ENCODE measurements at regions of chr4 and their contacts with region 1.

Region 1: GRCh38 chr4:78517050-78517652 is 34.4 kb upstream of the ANXA3 start:
- DNase-seq: peak in 3 of 4 experiments; percentile 18 to 45 (median 23)
- ATAC-seq: peak; percentile 82
- H3K4me3 ChIP-seq: no peak overlapping the region
- H3K27ac ChIP-seq: no peak overlapping the region
- H3K4me1 ChIP-seq: no peaks in the 10 kb centered on the region
- H3K27me3 ChIP-seq: peaks cover 2 to 6% of the 10 kb centered on the region in 2 experiments; a peak in 2 of 5 replicates
- CTCF ChIP-seq: peak; percentile 53 to 79 (median 57); a peak in 5 of 6 replicates
- EP300 ChIP-seq: no peak
- POLR2A ChIP-seq: no peak
- RAD21 ChIP-seq: peak; percentile 77 to 82

Region 2: DNA sequence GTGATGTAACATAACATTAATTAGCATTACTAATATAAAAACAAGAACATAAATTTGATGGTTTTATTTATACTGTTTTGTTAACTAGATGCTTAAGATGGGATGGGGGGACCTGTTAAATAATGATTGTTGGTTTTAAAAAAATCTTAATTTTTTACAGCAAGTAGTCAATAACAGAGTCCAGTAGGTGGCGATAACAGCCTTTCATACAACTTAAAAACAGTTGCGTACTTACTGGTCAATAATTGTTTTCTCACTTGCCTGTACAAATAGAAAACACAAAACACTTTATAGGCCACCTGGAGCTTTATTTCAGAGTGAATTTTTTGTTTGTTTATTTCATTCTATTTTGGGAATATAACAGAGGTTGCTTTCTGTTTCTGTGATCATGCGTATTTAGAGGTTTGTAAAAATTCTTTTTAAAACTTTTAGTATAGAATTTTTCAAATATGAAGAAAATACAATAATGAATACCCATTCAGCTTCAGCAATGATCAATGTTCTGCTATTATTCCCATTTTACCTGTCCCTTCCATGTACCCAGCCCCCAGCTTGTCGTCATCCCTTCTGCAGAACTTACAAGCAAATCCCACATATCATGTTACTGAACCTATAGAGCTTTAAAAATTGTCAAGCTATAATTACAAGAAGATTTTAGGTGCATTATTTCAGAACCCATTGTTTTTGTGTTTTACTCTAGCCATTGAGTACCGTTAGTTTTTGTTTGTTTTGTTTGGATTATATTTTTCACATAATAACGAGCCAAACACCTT is 557.4 kb before region 1 on chr4:
- CTCF ChIA-PET with region 1: interaction called, 5 read pairs
- POLR2A ChIA-PET with region 1: no interaction called
- in situ Hi-C with region 1: no loop called
- intact Hi-C with region 1: loop called (anchors 2 kb)
- DNase-seq: peak; percentile 34 to 60 (median 45)
- ATAC-seq: peak; percentile 66
- H3K4me3 ChIP-seq: no peak overlapping the region
- H3K27ac ChIP-seq: no peak overlapping the region
- H3K4me1 ChIP-seq: no peaks in the 10 kb centered on the region
- H3K27me3 ChIP-seq: no peaks in the 10 kb centered on the region
- CTCF ChIP-seq: peak; percentile 43 to 64 (median 44); a peak in 3 of 6 replicates
- EP300 ChIP-seq: no peak
- POLR2A ChIP-seq: no peak
- RAD21 ChIP-seq: peak; percentile 68 to 73

Region 3: DNA sequence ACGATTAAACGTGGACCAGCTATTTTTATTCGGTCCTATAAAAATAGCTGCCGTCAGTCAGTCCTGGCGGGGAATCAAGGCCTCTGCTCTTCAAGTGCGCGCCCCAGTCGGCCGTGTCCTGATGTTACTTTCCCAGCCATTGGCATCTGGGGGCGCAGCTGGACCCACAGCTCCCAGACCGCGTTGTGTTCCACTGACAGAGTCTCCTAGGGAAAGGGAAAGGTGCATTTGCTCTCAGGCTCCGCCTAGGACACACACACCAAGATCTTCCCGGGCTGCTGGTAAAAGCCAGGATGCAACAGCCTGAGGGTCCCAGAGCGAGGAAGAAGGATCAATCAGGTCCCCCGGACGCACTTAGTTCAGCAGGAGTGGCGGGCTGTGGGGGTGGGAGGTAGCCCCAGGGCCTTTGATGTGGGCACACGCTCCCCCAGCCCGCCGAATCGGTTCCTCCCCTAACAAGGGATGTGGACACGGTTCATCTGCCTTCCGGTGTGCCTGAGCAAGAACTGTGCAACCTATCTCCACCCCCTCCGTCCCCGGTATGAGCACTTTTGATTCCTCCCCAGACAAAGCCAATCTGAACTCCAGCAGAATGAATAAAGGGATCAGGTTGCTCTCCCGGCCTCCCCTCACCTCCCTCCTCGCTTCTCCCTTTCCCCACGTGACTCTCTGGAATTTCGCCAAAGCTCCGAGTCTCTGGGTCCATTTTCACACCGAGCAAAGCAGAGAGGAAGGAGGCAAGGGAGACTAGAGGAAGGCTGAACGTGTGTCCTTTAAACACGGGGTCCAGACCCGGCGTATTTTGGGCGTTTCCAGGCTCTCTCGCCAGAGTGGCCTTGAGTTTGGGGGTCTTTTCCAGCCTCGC is 460.7 kb before region 1 on chr4:
- CTCF ChIA-PET with region 1: no interaction called
- POLR2A ChIA-PET with region 1: no interaction called
- in situ Hi-C with region 1: no loop called
- intact Hi-C with region 1: loop called (anchors 1 kb)
- DNase-seq: peak; percentile 10 to 28 (median 16)
- ATAC-seq: peak; percentile 39
- H3K4me3 ChIP-seq: no peak overlapping the region
- H3K27ac ChIP-seq: no peak overlapping the region
- H3K4me1 ChIP-seq: peaks cover 0 to 18% of the 10 kb centered on the region in 2 experiments; a peak in 4 of 5 replicates
- H3K27me3 ChIP-seq: peaks cover 35 to 41% of the 10 kb centered on the region in 2 experiments
- CTCF ChIP-seq: no peak
- EP300 ChIP-seq: no peak
- POLR2A ChIP-seq: no peak
- RAD21 ChIP-seq: no peak

Region 4: DNA sequence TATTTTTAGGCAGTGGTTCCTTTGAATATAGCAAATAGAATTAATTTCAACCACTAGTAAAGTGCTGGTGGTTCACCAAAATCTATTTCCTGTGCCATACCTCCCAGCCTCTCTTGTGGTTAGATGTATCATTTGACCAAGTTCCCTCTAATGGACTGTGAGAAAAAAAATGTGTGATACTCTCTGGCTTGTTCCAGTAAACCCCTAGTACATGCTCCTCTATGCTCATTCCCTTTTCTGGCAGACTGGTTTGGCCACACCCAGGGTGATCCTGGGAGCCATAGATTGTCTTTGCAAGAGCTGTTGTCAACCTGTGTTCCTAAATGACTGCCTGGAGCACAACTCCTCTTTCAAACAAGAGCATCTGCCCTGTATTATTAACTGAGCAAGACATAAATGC is 350.5 kb before region 1 on chr4:
- CTCF ChIA-PET with region 1: no interaction called
- POLR2A ChIA-PET with region 1: no interaction called
- in situ Hi-C with region 1: no loop called
- intact Hi-C with region 1: loop called (anchors 10 kb)
- DNase-seq: no peak
- ATAC-seq: no peak
- H3K4me3 ChIP-seq: no peak overlapping the region
- H3K27ac ChIP-seq: no peak overlapping the region
- H3K4me1 ChIP-seq: no peaks in the 10 kb centered on the region
- H3K27me3 ChIP-seq: peaks cover 3 to 7% of the 10 kb centered on the region in 2 experiments; a peak in 2 of 5 replicates
- CTCF ChIP-seq: no peak
- EP300 ChIP-seq: no peak
- POLR2A ChIP-seq: no peak
- RAD21 ChIP-seq: no peak

Region 5: GRCh38 chr4:78197947-78198346 is 319.2 kb before region 1 on chr4:
- CTCF ChIA-PET with region 1: no interaction called
- POLR2A ChIA-PET with region 1: no interaction called
- in situ Hi-C with region 1: no loop called
- intact Hi-C with region 1: loop called (anchors 10 kb)
- DNase-seq: peak in 1 of 4 experiments; percentile 10
- ATAC-seq: peak; percentile 62; the same call in 2 of the 3 replicates
- H3K4me3 ChIP-seq: no peak overlapping the region
- H3K27ac ChIP-seq: no peak overlapping the region
- H3K4me1 ChIP-seq: no peaks in the 10 kb centered on the region
- H3K27me3 ChIP-seq: no peaks in the 10 kb centered on the region; a peak in 1 of 5 replicates
- CTCF ChIP-seq: peak in 1 of 3 experiments; percentile 24; a peak in 1 of 6 replicates
- EP300 ChIP-seq: no peak
- POLR2A ChIP-seq: no peak
- RAD21 ChIP-seq: no peak

Region 6: DNA sequence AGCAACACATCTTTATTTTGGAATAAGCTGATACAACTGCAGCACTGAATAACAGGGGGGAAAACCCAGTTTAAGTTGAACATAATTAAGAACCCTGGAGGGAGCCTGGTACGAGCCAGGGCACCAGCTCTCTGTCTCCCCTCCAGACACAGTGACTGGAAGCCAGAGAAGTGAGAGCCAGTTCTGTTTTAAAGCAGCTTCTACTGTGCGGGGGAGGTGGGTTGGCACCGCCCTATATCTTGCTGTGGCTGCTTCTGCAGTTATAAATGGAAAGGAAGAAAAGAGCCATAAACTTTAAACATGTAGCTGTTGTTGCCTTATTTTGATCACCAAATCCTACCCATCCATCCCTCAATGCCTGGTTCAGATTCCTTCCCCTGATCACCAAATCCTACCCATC is 173.5 kb before region 1 on chr4:
- CTCF ChIA-PET with region 1: no interaction called
- POLR2A ChIA-PET with region 1: no interaction called
- in situ Hi-C with region 1: no loop called
- intact Hi-C with region 1: loop called (anchors 5 kb)
- DNase-seq: no peak
- ATAC-seq: no peak
- H3K4me3 ChIP-seq: no peak overlapping the region
- H3K27ac ChIP-seq: no peak overlapping the region
- H3K4me1 ChIP-seq: no peaks in the 10 kb centered on the region
- H3K27me3 ChIP-seq: peaks cover 8 to 13% of the 10 kb centered on the region in 2 experiments; a peak in 3 of 5 replicates
- CTCF ChIP-seq: no peak
- EP300 ChIP-seq: no peak
- POLR2A ChIP-seq: no peak
- RAD21 ChIP-seq: no peak

Region 7: DNA sequence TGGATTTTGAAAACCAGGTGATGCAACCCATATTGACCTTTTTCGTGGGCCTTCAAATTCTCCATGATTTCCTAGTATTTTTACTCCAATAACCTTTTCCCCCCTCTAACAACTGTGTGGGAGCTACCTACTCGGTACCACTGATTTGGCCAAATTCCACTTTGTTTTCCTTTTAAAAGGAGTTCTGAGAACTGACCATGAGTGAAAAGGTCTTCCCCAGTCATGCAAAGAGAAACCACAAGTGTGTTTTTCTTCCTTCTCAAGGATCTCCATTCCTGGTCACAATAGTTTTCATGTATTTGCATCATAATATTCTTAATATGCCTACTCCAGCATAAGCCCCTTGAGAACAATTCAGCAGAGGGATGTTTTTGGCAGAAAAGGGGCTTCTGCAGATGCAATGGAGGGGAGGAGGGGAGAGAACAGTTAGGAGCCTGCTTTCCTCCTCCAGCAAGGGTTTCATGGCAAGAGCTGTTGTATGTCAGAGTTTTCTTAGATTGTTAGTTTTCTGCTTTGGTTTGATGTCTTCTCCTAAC is 160.8 kb before region 1 on chr4:
- CTCF ChIA-PET with region 1: no interaction called
- POLR2A ChIA-PET with region 1: no interaction called
- in situ Hi-C with region 1: no loop called
- intact Hi-C with region 1: no loop called
- DNase-seq: no peak
- ATAC-seq: no peak
- H3K4me3 ChIP-seq: no peak overlapping the region
- H3K27ac ChIP-seq: no peak overlapping the region
- H3K4me1 ChIP-seq: no peaks in the 10 kb centered on the region
- H3K27me3 ChIP-seq: peaks cover 0 to 4% of the 10 kb centered on the region in 2 experiments; a peak in 2 of 5 replicates
- CTCF ChIP-seq: no peak
- EP300 ChIP-seq: no peak
- POLR2A ChIP-seq: no peak
- RAD21 ChIP-seq: no peak

Region 8: DNA sequence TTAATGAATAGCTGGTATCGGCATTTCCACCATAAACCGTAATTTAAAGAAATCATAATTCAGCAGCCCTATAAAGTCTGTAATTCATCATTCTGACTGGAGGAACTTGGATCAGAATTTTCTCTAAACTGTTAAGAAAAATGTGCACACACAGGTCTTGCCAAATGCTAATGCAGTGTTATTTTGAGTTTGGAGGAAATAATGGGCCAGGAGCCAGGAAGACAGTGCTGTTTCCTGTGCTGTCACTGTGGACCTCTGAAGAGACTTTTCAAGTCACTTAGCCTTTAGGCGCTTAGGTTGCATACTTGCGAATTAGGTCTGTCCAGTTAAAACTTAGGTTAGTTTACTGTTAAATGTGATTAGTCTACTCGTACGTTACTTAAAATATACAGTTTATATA is 103.0 kb before region 1 on chr4:
- CTCF ChIA-PET with region 1: no interaction called
- POLR2A ChIA-PET with region 1: no interaction called
- in situ Hi-C with region 1: no loop called
- intact Hi-C with region 1: loop called (anchors 10 kb)
- DNase-seq: no peak
- ATAC-seq: no peak
- H3K4me3 ChIP-seq: no peak overlapping the region
- H3K27ac ChIP-seq: no peak overlapping the region
- H3K4me1 ChIP-seq: no peaks in the 10 kb centered on the region
- H3K27me3 ChIP-seq: peaks cover 5 to 13% of the 10 kb centered on the region in 2 experiments; a peak in 4 of 5 replicates
- CTCF ChIP-seq: no peak
- EP300 ChIP-seq: no peak
- POLR2A ChIP-seq: no peak
- RAD21 ChIP-seq: no peak

Region 9: GRCh38 chr4:78464265-78464664 is 52.9 kb before region 1 on chr4:
- CTCF ChIA-PET with region 1: no interaction called
- POLR2A ChIA-PET with region 1: no interaction called
- in situ Hi-C with region 1: no loop called
- intact Hi-C with region 1: no loop called
- DNase-seq: no peak
- ATAC-seq: no peak
- H3K4me3 ChIP-seq: no peak overlapping the region
- H3K27ac ChIP-seq: no peak overlapping the region
- H3K4me1 ChIP-seq: no peaks in the 10 kb centered on the region
- H3K27me3 ChIP-seq: peaks cover 2 to 10% of the 10 kb centered on the region in 2 experiments; a peak in 3 of 5 replicates
- CTCF ChIP-seq: no peak
- EP300 ChIP-seq: no peak
- POLR2A ChIP-seq: no peak
- RAD21 ChIP-seq: no peak

Region 10: DNA sequence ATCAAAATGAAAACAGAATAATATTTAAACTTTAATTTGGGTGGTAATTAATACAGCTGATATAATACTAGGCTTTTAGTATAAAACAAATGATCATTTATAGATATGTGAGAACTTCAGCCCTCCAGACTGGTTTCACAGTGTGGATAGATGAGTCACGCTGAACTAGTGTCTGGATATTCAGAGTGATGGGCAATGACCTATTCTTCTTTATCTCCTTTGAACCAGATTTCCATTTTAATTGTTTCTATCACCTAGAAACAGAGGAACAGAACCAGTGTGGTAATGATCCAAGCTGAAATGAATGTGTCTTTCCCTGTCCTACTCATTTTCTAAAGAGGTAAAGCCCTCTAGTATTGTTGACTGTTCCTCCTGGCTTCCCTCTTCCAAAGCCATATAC is 1046.1 kb after region 1 on chr4:
- CTCF ChIA-PET with region 1: no interaction called
- POLR2A ChIA-PET with region 1: no interaction called
- in situ Hi-C with region 1: no loop called
- intact Hi-C with region 1: no loop called
- DNase-seq: peak in 1 of 4 experiments; percentile 14
- ATAC-seq: no peak
- H3K4me3 ChIP-seq: no peak overlapping the region
- H3K27ac ChIP-seq: no peak overlapping the region
- H3K4me1 ChIP-seq: peaks cover 0 to 3% of the 10 kb centered on the region in 2 experiments; a peak in 1 of 5 replicates
- H3K27me3 ChIP-seq: no peaks in the 10 kb centered on the region
- CTCF ChIP-seq: no peak
- EP300 ChIP-seq: no peak
- POLR2A ChIP-seq: no peak
- RAD21 ChIP-seq: no peak